ENCODE measurements at regions of chr14 and their contacts with region 1.

Region 1: GRCh38 chr14:70821584-70822529 is 12.5 kb upstream of the MAP3K9 start:
- DNase-seq: peak; percentile 45 to 68 (median 54)
- H3K4me3 ChIP-seq: peak overlapping the region; percentile 64
- H3K4me3 Mint-ChIP-seq: peak overlapping the region; percentile 60 to 94 (median 86)
- H3K27ac ChIP-seq: no peak overlapping the region
- H3K27ac Mint-ChIP-seq: peak overlapping the region in 6 of 8 donors; percentile 12 to 95 (median 36)
- H3K4me1 ChIP-seq: peaks cover 21% of the 10 kb centered on the region
- H3K4me1 Mint-ChIP-seq: peaks cover 14 to 21% (median 20%) of the 10 kb centered on the region in 3 donors
- H3K27me3 ChIP-seq: peaks cover 6% of the 10 kb centered on the region
- H3K27me3 Mint-ChIP-seq: peaks cover 3% of the 10 kb centered on the region in 2 donors

Region 2: GRCh38 chr14:70809543-70810244 is 12.2 kb before region 1 on chr14:
- CTCF ChIA-PET with region 1: interaction called, 30 read pairs
- POLR2A ChIA-PET with region 1: interaction called, 11 read pairs
- DNase-seq: peak; percentile 84 to 91 (median 89)
- H3K4me3 ChIP-seq: peak overlapping the region; percentile 47
- H3K4me3 Mint-ChIP-seq: peak overlapping the region in 1 of 7 donors; percentile 92
- H3K27ac ChIP-seq: peak overlapping the region; percentile 3
- H3K27ac Mint-ChIP-seq: peak overlapping the region in 3 of 8 donors; percentile 48 to 90 (median 67)
- H3K4me1 ChIP-seq: peaks cover 13% of the 10 kb centered on the region
- H3K4me1 Mint-ChIP-seq: peaks cover 11 to 14% (median 13%) of the 10 kb centered on the region in 3 donors
- H3K27me3 ChIP-seq: no peaks in the 10 kb centered on the region
- H3K27me3 Mint-ChIP-seq: no peaks in the 10 kb centered on the region

Region 3: DNA sequence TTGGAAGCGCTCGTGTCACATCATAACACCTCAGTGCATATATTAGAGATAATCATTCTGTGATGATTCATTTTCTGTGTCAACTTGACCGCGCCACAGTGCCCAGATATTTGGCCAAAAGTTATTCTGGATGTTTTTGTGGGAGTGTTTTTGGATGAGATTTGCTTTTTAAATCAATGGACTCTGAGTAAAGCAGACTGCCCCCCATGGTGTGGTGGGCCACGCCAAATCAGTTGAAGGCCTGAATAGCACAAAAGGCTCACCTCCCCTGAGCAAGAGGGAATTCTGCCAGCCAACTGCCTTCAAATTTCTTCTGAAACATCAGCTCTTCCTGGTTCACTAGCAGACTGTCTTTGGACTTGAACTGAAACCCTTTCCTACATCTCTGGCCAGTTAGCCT is 12.0 kb after region 1 on chr14:
- CTCF ChIA-PET with region 1: interaction called, 28 read pairs
- POLR2A ChIA-PET with region 1: no interaction called
- DNase-seq: no peak
- H3K4me3 ChIP-seq: no peak overlapping the region
- H3K4me3 Mint-ChIP-seq: no peak overlapping the region
- H3K27ac ChIP-seq: no peak overlapping the region
- H3K27ac Mint-ChIP-seq: peak overlapping the region in 1 of 8 donors; percentile 79
- H3K4me1 ChIP-seq: no peaks in the 10 kb centered on the region
- H3K4me1 Mint-ChIP-seq: no peaks in the 10 kb centered on the region
- H3K27me3 ChIP-seq: no peaks in the 10 kb centered on the region
- H3K27me3 Mint-ChIP-seq: no peaks in the 10 kb centered on the region

Region 4: DNA sequence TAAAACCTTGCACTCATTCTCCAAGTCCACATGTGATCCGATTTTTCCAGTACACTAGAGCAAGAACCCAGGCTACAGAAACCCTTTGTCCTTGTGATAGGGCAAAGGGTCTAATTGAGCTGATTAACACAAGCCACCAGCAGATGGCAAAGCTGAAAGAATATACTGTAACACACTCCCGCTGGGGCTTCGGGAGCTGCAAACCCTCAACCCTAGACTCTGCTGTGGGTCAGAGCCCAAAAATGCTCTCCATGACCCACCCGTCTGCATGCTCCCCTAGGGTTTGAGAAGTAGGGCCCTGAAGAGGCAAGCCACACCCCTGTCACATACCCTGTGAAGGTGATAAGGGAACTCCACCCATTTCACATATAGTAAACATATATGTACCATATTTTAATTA is 51.8 kb after region 1 on chr14:
- CTCF ChIA-PET with region 1: interaction called, 13 read pairs
- POLR2A ChIA-PET with region 1: interaction called, 5 read pairs
- DNase-seq: peak in 1 of 5 donors; percentile 28
- H3K4me3 ChIP-seq: no peak overlapping the region
- H3K4me3 Mint-ChIP-seq: peak overlapping the region in 4 of 7 donors; percentile 15 to 69 (median 42)
- H3K27ac ChIP-seq: no peak overlapping the region
- H3K27ac Mint-ChIP-seq: peak overlapping the region in 7 of 8 donors; percentile 61 to 87 (median 80)
- H3K4me1 ChIP-seq: peaks cover 13% of the 10 kb centered on the region
- H3K4me1 Mint-ChIP-seq: peaks cover 18 to 25% (median 24%) of the 10 kb centered on the region in 3 donors
- H3K27me3 ChIP-seq: no peaks in the 10 kb centered on the region
- H3K27me3 Mint-ChIP-seq: no peaks in the 10 kb centered on the region

Region 5: DNA sequence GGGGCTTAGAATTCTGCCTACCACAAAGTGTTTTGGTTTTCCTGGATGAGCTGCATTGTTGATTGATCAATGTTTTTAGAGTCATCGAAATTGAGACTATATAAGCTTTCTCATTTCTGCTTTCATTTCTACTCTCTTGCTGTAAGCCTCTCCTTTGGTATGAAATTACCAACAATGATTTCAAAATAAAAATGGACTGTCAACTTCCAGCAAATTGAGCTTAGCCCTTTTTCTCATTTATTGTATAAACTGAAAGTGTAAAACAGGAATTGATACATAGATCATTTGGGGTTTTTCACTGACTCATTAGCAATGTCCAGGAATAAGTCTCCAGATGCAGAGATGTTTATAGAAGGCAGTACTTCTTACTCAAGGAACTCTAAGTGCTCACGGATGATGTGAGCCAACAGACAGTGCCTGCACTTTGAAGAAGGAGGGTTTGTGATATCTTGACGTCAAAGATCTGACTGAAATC is 65.4 kb after region 1 on chr14:
- CTCF ChIA-PET with region 1: interaction called, 29 read pairs
- POLR2A ChIA-PET with region 1: interaction called, 6 read pairs
- DNase-seq: no peak
- H3K4me3 ChIP-seq: peak overlapping the region; percentile 40
- H3K4me3 Mint-ChIP-seq: peak overlapping the region; percentile 19 to 84 (median 71)
- H3K27ac ChIP-seq: no peak overlapping the region
- H3K27ac Mint-ChIP-seq: peak overlapping the region; percentile 70 to 95 (median 88)
- H3K4me1 ChIP-seq: peaks cover 68% of the 10 kb centered on the region
- H3K4me1 Mint-ChIP-seq: peaks cover 70 to 93% (median 87%) of the 10 kb centered on the region in 3 donors
- H3K27me3 ChIP-seq: no peaks in the 10 kb centered on the region
- H3K27me3 Mint-ChIP-seq: peaks cover 0 to 1% of the 10 kb centered on the region in 2 donors

Region 6: DNA sequence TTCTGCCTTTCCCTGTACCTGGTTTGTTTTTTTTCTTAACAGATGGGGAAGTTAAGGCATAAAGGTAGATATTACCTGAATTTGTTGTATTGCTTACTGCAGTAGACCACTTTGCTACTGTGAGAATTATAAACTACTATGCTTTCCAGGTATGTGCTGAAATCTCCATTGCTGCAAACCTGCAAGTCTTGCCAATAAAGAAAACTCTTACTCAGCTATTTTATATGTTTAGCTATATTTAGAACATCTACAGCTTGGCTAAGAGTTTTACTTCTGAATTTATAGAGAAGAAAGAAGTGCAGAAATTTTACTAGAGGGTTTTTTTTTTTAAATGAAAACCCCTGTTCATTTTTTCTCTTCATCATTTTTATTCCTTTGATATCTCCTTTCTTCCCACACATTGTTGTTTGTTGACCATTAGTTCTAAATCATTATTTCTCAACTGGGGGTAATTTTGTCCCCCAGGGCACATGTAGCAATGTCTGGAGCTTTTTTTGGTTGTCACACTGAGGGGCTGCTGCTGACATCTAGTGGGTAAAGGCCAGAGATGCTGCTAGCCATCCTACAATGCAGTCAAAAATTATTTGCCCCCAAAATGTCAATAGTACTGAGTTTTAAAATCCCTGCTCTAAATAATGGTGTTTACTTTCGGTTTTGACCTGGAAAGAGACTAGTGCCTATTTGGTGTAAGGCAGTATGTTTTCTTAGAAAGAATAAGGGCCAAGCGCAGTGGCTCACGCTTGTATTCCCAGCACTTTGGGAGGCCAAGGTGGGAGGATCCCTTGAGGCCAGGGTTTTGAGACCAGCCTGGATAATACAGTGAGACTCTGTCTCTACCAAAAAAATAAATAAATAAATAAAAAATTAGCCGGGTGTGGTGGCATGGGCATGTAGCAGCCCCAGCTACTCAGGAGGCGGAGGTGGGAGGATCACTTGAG is 134.0 kb after region 1 on chr14:
- CTCF ChIA-PET with region 1: interaction called, 56 read pairs
- POLR2A ChIA-PET with region 1: interaction called, 5 read pairs
- DNase-seq: peak; percentile 23 to 73 (median 49)
- H3K4me3 ChIP-seq: no peak overlapping the region
- H3K4me3 Mint-ChIP-seq: no peak overlapping the region
- H3K27ac ChIP-seq: no peak overlapping the region
- H3K27ac Mint-ChIP-seq: peak overlapping the region in 7 of 8 donors; percentile 37 to 91 (median 71)
- H3K4me1 ChIP-seq: peaks cover 24% of the 10 kb centered on the region
- H3K4me1 Mint-ChIP-seq: peaks cover 40 to 51% (median 42%) of the 10 kb centered on the region in 3 donors
- H3K27me3 ChIP-seq: no peaks in the 10 kb centered on the region
- H3K27me3 Mint-ChIP-seq: no peaks in the 10 kb centered on the region

Region 7: DNA sequence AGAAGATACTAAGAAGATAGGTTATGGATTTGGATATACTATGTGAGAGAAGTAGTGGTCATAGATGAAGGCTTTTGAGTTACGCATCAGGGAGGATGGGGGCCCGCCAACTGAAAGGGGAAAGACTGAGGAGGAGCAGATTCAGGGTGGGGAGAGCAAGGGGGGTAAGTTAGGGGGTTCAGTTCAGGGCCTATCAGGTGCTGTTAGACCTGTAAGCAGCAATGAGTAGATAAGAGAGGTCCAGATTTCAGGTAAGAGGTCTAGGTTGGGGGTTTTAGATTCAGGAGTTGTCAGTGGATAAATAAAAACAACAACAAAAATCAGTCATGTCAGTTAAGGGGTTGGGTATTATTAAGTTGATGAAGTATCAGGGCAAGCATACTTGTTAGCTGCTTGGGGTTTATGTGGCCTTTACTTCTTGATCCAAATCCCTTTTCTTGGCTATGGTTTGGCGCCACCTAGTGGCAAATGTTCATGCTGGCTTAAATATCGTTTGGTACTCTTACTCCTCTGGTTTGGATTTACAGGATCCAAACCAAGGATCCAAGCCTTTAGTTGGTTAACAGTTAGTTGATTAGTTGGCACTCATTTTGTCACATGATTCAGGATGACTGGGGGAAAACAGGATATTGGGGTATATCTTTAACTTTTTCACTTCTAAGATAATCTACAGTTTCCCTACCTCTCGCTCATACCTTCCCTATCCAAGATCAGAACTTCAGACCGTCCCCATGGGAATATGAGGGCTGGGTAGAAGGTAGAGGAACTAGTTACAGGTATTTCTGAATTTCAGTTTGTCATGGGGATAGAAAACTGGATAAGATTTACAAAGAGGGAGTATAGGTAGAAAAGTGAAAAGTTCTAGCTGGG is 150.5 kb after region 1 on chr14:
- CTCF ChIA-PET with region 1: interaction called, 22 read pairs
- POLR2A ChIA-PET with region 1: no interaction called
- DNase-seq: peak; percentile 64 to 86 (median 77)
- H3K4me3 ChIP-seq: no peak overlapping the region
- H3K4me3 Mint-ChIP-seq: no peak overlapping the region
- H3K27ac ChIP-seq: no peak overlapping the region
- H3K27ac Mint-ChIP-seq: peak overlapping the region; percentile 5 to 94 (median 44)
- H3K4me1 ChIP-seq: peaks cover 34% of the 10 kb centered on the region
- H3K4me1 Mint-ChIP-seq: peaks cover 45 to 71% (median 56%) of the 10 kb centered on the region in 3 donors
- H3K27me3 ChIP-seq: no peaks in the 10 kb centered on the region
- H3K27me3 Mint-ChIP-seq: no peaks in the 10 kb centered on the region

Measured in CD8-positive, alpha-beta memory T cell (primary cell).